Ovary (tissue), 10 donors: ENCODE measurements at regions of chr15 and their contacts with region 1.

Region 1: DNA sequence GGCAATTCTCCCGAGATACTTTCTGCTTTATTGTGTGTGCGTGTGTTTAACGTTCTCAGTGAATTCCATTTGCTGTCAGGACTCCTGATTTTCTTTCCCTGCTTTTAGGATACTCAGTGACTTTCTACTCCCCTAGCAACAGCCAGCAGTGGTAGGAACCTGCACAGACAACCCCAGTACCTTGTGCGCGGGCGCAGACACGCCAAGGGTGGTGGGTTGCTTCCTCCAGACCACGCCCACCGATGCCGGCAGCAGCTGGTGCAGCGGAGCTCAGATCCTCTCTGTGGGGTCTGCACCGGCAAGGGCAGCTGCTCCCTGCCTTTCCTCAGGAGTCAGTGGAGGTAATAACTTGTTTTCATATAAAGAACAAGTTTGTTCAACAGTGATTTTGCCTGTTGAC is 225.1 kb upstream of the NDN start:
- DNase-seq: no peak
- H3K4me3 ChIP-seq: no peak overlapping the region
- H3K27ac ChIP-seq: no peak overlapping the region
- H3K4me1 ChIP-seq: no peaks in the 10 kb centered on the region
- H3K27me3 ChIP-seq: no peaks in the 10 kb centered on the region
- CTCF ChIP-seq: no peak
- EP300 ChIP-seq: no peak
- POLR2A ChIP-seq: no peak

Region 2: DNA sequence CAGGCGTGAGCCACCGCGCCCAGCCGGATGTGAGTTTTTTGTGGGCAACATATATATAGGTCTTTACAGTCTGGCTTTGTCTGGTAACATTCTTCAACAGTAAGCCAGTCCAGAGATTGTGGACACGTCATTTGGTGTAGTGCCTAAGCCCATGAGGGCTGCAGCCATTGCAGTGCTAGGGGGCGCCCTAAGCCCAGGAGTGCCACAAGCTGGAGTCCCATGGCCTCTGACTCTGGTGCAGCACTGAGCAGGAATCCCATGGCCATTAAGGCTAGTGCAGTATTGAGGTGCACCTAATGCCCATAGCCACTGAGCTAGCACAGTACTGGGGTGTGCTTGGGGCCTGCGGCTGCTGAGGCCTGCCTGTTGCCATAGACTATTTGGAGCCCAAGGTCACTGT is 88.7 kb before region 1 on chr15:
- intact Hi-C with region 1: no loop called
- DNase-seq: no peak
- H3K4me3 ChIP-seq: no peak overlapping the region
- H3K27ac ChIP-seq: no peak overlapping the region
- H3K4me1 ChIP-seq: no peaks in the 10 kb centered on the region
- H3K27me3 ChIP-seq: no peaks in the 10 kb centered on the region
- CTCF ChIP-seq: no peak
- EP300 ChIP-seq: no peak
- POLR2A ChIP-seq: no peak

Region 3: DNA sequence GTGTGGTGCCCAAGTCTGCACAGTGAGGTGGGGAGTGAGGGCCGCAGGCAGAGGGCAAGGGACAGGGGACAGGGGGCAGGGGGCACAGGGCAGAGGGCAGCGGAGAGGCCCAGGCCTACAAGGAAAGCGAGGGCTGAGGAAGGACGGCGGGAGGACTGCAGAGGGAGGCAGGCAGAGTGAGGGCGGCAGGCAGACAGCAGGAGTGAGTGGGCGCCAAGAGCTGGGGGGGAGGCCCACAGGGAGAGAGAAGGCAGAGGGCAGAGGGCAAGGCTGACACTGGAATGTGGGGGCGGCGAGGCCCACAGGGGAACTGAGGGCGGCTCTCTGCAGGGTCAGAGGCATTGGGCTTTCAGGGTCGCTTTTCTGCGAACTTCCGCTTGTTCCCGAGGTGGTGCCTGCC is 42.7 kb after region 1 on chr15:
- intact Hi-C with region 1: loop called in 1 of 4 experiments (anchors 10 kb)
- DNase-seq: no peak
- H3K4me3 ChIP-seq: no peak overlapping the region
- H3K27ac ChIP-seq: no peak overlapping the region
- H3K4me1 ChIP-seq: no peaks in the 10 kb centered on the region
- H3K27me3 ChIP-seq: no peaks in the 10 kb centered on the region
- CTCF ChIP-seq: no peak
- EP300 ChIP-seq: no peak
- POLR2A ChIP-seq: no peak

Region 4: DNA sequence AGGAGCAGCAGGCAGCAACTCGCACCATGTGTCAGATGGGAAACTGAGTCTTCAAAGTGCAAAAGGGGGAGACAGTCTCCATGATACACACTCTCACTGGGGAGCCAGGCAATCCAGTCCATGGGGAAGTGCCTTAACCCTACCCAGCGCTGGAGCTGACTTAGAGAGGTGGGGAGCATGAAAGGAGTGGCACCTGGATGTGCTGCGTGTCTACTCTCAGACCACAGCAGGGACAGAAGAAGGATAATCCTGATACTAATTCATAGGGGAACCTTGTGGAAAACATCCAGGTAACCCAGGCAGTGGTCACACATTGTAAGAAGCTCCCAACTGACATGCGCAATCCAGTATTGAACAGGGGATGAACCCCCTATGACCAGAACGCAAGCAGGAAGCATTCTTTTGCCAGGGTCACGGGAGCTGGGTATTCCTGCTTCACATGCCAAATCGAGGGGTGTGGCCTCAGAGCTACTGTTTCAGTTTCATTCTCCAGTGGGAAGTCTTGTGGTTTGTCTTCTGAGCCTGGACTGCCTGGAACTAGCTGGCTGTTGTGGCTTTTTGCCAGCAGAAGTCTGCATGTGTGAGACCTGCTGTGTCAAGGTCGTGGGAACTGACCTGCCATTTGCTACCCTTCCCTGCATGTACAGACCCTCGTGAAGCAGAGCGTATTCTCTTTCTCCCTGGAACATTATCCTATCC is 142.5 kb after region 1 on chr15:
- intact Hi-C with region 1: no loop called
- DNase-seq: no peak
- H3K4me3 ChIP-seq: no peak overlapping the region
- H3K27ac ChIP-seq: no peak overlapping the region
- H3K4me1 ChIP-seq: no peaks in the 10 kb centered on the region
- H3K27me3 ChIP-seq: no peaks in the 10 kb centered on the region
- CTCF ChIP-seq: no peak
- EP300 ChIP-seq: no peak
- POLR2A ChIP-seq: no peak

Region 5: GRCh38 chr15:24146251-24146650 is 234.1 kb after region 1 on chr15:
- intact Hi-C with region 1: no loop called
- DNase-seq: no peak
- H3K4me3 ChIP-seq: no peak overlapping the region
- H3K27ac ChIP-seq: no peak overlapping the region
- H3K4me1 ChIP-seq: no peaks in the 10 kb centered on the region
- H3K27me3 ChIP-seq: no peaks in the 10 kb centered on the region
- CTCF ChIP-seq: no peak
- EP300 ChIP-seq: no peak
- POLR2A ChIP-seq: no peak